ENCODE measurements at regions of chr17 and their contacts with region 1.

Region 1: GRCh38 chr17:51540151-51540550 is 279.8 kb downstream of the UTP18 start:
- DNase-seq: no peak
- ATAC-seq: no peak
- H3K4me3 ChIP-seq: no peak overlapping the region
- H3K27ac ChIP-seq: no peak overlapping the region
- H3K4me1 ChIP-seq: no peaks in the 10 kb centered on the region
- H3K27me3 ChIP-seq: no peaks in the 10 kb centered on the region

Region 2: DNA sequence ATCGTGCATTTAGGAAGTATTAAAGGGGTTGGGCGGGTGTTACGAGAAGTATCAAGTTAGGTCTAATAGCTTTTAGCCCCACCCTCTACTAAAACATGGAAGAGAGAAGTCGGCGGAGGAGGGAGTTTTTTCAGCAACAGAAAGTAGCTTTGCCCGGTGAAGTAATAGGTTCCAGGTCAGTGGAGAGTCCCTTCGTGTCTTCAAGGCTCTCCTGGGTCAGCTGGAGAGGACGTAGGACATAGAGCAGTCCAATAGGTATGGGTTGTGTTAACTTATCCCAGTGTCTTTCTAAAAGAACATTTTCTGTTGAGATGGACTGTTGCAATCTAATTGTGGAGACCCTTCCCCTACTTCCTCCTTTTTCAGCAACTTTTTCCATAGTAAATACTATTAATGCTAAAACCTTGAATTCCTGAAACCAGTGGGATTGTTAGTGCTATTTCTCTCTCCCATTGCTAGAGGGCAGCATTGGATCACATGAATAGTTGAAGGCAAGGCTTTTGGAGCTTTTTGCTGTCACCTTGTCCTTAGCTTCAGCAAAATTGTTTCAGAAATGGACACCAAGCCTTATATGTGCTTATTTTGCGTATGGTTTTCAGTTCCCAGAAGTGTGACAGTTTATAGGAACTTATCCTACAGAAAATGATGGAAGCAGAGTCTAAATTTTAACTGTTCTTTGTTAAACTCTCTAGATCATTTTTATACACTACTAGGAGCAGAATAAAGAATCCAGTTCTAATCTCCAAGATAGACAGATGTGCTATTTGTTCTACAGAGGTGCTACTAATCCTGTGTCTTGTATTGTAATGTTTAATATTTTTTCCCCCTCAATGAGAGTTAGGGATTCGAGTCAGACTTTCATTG is 241.4 kb before region 1 on chr17:
- intact Hi-C with region 1: loop called in 1 of 4 experiments (anchors 10 kb)
- DNase-seq: no peak
- ATAC-seq: peak in 1 of 2 donors; percentile 22
- H3K4me3 ChIP-seq: no peak overlapping the region
- H3K27ac ChIP-seq: no peak overlapping the region
- H3K4me1 ChIP-seq: no peaks in the 10 kb centered on the region
- H3K27me3 ChIP-seq: no peaks in the 10 kb centered on the region

Region 3: DNA sequence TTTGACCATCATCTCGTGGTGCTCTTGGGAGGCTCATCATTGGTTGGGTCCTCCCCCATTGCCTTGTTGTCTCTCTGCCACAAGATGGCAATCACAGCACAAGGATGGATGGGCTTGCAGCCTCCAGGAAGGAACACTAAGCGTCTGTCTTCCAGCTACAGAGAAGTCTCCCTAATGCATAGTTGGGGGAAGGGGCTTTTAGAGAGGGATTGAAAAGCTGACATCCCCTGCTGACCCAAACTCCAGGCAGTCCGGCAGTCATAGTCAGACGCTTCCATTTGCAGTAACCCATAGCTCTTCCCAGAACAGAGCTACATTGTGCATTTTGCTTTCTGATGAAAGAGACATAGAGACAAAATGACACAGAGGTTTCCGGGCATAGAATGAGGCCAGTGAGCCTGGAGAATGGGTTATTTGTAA is 168.4 kb before region 1 on chr17:
- intact Hi-C with region 1: loop called in 2 of 4 experiments (anchors 10 kb)
- DNase-seq: peak in 2 of 3 donors; percentile 31 to 49
- ATAC-seq: peak; percentile 83 to 93
- H3K4me3 ChIP-seq: no peak overlapping the region
- H3K27ac ChIP-seq: no peak overlapping the region
- H3K4me1 ChIP-seq: no peaks in the 10 kb centered on the region
- H3K27me3 ChIP-seq: no peaks in the 10 kb centered on the region